GM10248 (cell line): ENCODE measurements at regions of chr11 and their contacts with region 1.

Region 1: DNA sequence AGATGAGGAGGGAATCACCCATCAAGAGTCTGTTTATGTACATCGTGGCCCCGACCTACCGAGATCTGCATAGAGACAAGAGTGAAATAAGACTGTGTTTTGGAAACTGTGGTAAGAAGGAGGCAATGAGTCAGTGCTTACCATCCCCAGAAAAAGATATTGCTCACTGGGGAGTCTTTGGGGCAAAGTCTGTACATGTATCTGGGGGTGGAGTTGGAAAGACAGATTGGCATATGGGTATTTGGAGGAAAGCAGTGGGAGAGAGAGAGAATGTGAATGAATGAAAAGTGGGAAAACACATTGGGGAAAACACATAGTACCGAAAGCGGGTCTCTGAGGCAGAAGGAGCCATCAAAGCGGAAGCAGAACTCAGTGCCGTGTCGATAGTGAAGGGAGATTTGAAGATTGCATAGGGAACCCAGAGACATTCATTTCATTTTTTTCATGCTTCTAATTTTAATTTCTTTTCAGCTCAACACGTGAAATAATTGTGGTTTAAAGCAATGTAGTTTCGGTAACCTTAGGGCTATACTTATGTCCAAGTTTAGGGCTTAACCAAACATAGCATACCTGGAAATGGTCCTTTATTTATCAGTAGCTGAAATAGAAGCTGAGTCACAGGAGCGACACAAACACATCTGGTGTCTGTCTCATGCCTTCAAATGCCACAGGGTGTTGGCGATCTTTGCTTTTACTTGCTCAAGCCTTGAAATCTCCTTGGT is 98.6 kb upstream of the CD44 start:
- DNase-seq: peak; percentile 49
- CTCF ChIP-seq: no peak

Region 2: DNA sequence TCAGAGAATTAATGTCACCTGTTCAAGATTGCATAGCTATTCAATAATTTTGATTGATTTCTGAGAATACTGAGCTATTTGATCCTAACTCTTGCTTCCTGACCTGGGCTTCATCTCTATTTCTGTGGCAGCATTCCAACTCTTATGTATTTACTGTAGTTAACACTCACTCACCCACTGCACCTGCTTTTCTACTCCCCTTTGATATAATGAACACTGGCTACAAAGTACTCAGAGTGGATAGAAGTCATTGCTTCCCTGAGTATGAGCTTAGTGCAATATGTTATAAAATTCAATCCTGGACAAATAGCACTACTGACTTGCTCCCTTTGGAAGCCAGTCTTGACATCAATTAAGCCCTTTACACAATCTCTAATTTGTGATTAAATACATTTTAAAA is 241.4 kb before region 1 on chr11:
- CTCF ChIA-PET with region 1: no interaction called
- POLR2A ChIA-PET with region 1: no interaction called
- DNase-seq: no peak
- CTCF ChIP-seq: no peak

Region 3: GRCh38 chr11:34860034-34860433 is 180.3 kb before region 1 on chr11:
- CTCF ChIA-PET with region 1: no interaction called
- POLR2A ChIA-PET with region 1: no interaction called
- DNase-seq: no peak
- CTCF ChIP-seq: no peak

Region 4: GRCh38 chr11:35064114-35064800 is 23.9 kb after region 1 on chr11:
- CTCF ChIA-PET with region 1: interaction called, 12 read pairs
- POLR2A ChIA-PET with region 1: no interaction called
- DNase-seq: no peak
- CTCF ChIP-seq: no peak